Right ventricle myocardium superior (tissue), 1 donor: ENCODE measurements at regions of chr1 and their contacts with region 1.

Region 1: DNA sequence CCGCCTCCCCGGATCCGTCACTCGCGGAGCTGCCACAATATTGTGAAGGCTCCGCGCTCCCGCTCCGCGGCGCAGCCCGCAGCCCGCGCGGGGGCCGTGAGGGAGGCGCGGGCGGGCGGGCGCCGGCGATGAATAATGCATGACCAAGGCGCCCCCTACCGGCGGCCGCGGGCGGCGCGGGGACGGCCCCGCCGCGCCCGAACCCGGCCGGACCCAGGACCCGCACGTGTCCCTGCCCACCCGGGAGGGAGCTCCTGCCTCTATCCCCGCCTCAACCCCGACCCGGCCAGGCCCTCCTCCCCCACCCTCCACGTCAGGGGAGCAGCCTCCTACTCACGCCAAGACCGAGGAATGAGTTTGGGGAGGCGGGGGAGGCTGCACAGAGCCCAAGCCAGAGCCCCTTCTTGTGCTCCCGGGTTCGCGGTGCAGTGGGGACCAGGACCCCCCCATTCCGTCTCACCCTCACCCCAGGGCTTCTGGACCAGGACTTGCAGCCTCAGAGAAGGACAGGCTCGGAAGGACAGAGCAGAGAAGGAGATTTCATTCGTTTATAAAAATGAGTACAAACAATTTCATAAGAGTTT is 70.8 kb upstream of the CASZ1 start:
- DNase-seq: peak; percentile 75
- ATAC-seq: peak; percentile 84

Region 2: DNA sequence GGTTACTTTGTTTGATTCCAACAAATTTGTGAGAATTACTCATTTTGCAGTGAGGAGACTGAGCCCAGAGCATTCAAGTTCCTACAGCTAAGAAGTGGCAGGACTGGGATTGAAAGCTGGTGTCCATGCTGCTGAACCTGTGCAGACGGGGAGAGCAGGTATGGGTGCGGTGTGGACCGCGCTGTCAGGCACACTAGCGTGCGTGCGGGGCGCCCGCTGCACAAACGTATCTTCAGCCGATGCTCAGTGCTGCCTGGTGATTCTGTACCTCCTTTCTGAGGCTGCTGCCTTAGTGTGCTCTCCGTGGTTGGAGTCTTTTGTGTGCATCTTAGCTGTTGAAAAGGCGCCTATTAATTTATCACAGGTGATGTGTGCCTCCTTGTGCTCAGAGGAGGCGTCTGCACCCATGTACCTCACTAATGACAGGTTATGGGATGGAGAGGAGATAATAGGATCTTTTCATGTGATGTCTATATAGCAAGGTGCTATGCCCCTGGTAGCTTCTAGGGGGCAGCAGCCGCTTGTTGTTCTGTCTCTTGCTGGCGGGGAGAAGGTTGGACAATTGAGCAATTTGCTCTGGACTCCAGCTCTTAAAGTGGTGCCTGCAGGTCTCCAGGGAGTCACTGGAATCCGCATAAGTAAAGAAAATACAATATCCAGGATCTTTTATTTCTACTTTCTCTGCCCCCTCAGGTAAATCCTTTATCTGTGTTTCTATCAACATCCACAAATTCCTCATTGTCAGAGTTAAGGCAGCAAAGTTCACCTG is 359.9 kb before region 1 on chr1:
- intact Hi-C with region 1: loop called (anchors 5 kb)
- DNase-seq: peak; percentile 67
- ATAC-seq: peak; percentile 94

Region 3: DNA sequence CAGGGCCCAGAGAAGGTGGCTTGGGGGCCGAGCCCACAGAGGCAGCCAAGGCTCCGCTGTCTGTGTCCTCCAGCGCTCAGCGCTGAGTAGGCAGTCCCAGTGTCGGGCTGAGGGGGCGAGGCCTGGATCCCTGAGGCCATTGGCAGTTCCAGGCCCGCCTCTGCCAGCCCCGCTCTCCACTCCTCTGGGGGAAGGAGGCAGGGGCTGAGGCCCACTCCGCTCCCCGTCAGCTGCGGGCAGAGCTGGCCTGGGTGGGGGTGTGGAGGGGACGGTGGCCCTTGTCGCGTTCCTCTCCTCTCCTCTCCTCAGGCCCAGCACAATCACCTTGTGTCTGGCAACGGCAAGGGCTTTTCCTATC is 203.6 kb before region 1 on chr1:
- intact Hi-C with region 1: loop called (anchors 10 kb)
- DNase-seq: peak; percentile 78
- ATAC-seq: peak; percentile 73

Region 4: GRCh38 chr1:10796019-10796944 is 70.9 kb before region 1 on chr1 and contains the start of gene CASZ1:
- intact Hi-C with region 1: loop called (anchors 5 kb)
- DNase-seq: peak; percentile 83
- ATAC-seq: peak; percentile 67
- total RNA-seq, gene CASZ1: 50.3 TPM

Region 5: DNA sequence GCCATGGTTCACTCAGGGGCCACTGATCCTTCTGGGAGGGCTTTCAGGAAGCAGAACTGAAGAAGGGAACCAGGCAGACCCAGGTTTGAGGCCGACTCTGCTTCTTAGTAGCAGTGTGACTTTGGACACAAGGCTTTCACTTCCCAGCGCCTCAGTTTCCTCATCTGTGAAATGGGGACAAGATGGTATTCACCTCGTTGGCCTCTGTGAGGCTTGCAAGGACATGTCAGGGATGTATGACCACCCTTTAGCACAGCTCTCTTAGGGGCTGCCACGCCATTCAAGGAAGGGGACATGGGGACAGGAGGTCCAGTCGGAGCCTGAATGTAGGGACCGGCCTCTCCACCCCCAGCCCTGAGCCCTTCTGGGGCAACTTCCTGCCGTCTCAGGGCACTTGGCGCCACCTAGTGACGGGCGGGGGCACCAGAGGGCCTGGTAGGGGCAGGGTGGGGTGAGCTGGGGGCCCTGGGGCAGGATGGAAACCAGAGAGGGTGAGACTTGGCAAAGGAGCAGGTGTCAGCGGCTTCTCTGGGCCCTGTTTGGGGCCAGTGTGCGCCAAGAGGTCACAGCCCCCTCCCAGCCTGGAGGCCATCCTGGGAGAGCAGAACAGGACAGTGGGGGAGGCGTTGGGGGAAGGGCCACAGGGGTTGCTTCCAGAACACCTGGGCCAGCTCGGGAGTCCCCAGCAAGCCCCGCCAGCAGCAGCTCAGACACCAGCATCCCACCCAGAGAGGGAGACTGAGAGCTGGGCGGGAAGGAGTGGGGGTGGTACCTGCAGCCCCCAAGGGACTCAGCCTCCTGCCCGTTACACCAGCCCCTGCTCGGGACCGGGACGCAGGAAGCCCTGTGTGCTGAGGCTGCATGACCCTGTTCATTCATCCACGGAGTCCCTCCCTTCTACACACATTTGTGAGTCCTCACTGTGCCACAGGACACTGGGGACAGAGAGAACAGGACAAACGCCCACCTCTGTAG is 42.8 kb after region 1 on chr1:
- intact Hi-C with region 1: no loop called
- DNase-seq: peak; percentile 59
- ATAC-seq: peak; percentile 84